Activated naive CD4-positive, alpha-beta T cell treated with anti-CD3 and anti-CD28 coated beads, Interleukin-2, amount 10 ng/mL, durations not matched to agents 7 days and 5 days (primary cell): ENCODE measurements at regions of chr9 and their contacts with region 1.

Region 1: DNA sequence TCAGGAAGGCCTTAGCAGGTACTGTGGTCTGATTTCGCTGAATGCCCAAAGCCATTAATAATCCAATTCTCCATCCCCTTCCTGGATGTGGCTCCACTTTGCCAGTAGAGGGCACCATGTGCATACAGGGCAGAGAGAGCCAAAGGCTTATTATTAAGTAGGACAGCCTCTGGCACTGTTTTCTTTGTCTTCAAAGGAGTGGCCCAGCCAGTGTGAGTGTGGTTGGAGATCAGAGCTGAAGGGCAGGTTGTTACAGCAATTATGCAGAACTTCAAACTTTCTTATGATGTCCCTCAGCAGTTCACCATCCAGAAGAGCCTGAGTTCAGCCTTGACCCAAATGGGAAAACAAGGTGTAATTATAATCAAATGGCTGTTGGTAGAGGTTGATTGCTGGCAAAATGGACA is 38.6 kb upstream of the CEMIP2 start:
- DNase-seq: peak; percentile 74
- H3K4me3 Mint-ChIP-seq: no peak overlapping the region
- H3K27ac Mint-ChIP-seq: no peak overlapping the region
- H3K4me1 Mint-ChIP-seq: peaks cover 6% of the 10 kb centered on the region
- H3K27me3 Mint-ChIP-seq: peaks cover 5% of the 10 kb centered on the region

Region 2: GRCh38 chr9:71795097-71795813 is 11.6 kb before region 1 on chr9:
- CTCF ChIA-PET with region 1: interaction called, 14 read pairs
- DNase-seq: no peak
- H3K4me3 Mint-ChIP-seq: peak overlapping the region; percentile 46
- H3K27ac Mint-ChIP-seq: peak overlapping the region; percentile 98
- H3K4me1 Mint-ChIP-seq: peaks cover 59% of the 10 kb centered on the region
- H3K27me3 Mint-ChIP-seq: no peaks in the 10 kb centered on the region